CD4-positive, alpha-beta memory T cell (primary cell): ENCODE measurements at regions of chr1 and their contacts with region 1.

Region 1: DNA sequence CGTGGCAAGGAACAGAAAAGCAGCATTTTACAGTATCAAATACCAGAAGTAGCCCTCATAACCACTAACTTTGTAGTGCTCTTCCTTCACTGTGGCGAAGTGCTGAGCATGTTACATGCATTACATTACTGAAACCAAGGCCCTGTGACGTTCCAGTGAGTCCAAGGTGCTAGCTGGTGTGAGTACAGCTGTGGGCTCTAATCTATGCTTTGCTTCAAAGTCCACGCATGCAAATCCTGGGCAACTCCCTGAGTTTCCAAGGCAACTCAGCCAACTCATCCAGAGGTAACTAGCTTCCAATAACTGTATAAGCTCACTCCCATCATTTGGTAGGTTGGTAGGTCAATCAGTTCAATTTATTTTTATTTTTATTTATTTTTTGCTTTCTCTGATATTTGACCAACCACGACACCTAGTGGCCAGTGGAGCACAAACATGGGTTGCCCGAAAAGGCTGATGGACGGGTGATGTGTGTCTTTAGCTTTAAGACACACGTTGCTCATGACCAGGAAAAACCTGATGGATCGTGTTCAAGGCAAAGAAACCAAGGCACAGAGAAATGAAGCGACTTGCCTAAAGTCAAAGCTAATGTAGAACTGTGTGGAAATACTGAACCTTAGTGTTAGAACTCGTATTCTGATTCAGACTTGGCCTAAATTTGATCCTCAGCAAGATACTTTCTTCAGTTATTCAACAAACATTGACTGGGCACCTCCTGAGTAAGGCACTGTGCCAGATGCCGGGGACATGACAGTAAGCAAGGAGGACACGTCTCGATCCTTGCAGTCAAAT is 73.0 kb downstream of the GNG12 start:
- DNase-seq: peak in 4 of 5 donors; percentile 33 to 58 (median 48)
- H3K4me3 ChIP-seq: no peak overlapping the region
- H3K4me3 Mint-ChIP-seq: no peak overlapping the region
- H3K27ac ChIP-seq: no peak overlapping the region
- H3K27ac Mint-ChIP-seq: no peak overlapping the region
- H3K4me1 ChIP-seq: no peaks in the 10 kb centered on the region
- H3K4me1 Mint-ChIP-seq: no peaks in the 10 kb centered on the region
- H3K27me3 ChIP-seq: no peaks in the 10 kb centered on the region
- H3K27me3 Mint-ChIP-seq: peaks cover 17 to 20% of the 10 kb centered on the region in 2 donors

Region 2: DNA sequence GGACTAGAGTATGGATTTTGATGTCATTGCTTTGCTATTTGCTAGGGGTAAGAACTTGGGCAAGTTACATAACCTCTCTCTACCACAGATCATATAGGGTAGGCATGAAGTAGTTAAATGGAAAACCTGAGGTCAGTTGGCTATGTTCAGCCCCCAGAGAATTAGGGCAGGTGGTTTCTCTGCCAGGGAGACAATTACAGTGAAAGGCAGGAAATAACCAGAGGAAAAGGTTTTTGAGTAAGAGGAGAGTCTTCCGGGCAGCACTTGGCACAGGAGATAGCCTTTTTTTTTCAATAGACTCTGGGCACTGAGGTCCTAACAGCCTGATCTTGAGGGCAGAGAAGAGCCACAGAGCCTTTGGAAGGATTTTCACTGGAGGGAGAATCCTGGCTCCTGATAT is 313.3 kb before region 1 on chr1:
- CTCF ChIA-PET with region 1: no interaction called
- POLR2A ChIA-PET with region 1: no interaction called
- intact Hi-C with region 1: no loop called
- DNase-seq: no peak
- H3K4me3 ChIP-seq: no peak overlapping the region
- H3K4me3 Mint-ChIP-seq: no peak overlapping the region
- H3K27ac ChIP-seq: no peak overlapping the region
- H3K27ac Mint-ChIP-seq: no peak overlapping the region
- H3K4me1 ChIP-seq: no peaks in the 10 kb centered on the region
- H3K4me1 Mint-ChIP-seq: peaks cover 0 to 7% (median 5%) of the 10 kb centered on the region in 4 donors
- H3K27me3 ChIP-seq: no peaks in the 10 kb centered on the region
- H3K27me3 Mint-ChIP-seq: peaks cover 3% of the 10 kb centered on the region in 2 donors

Region 3: DNA sequence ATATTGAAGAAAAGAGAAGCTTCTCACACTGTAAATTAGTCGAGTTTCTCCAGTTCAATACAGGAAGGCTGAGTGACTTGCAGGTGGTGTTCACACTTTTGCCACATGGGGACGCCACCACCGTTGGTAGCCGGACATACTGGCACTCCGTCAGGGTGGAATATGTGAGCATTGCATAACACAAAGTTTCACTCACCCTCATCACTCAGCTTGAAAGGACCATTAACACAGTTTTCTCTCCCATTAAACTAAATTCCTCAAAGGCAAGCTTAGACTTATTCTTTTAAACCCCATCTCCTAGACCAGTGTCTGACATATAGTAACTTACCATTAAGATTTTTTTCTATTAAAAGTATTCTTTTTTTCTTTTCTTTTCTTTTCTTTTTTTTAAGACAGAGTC is 224.8 kb before region 1 on chr1:
- CTCF ChIA-PET with region 1: interaction called, 84 read pairs
- POLR2A ChIA-PET with region 1: no interaction called
- intact Hi-C with region 1: loop called (anchors 1 kb)
- DNase-seq: peak in 1 of 5 donors; percentile 6
- H3K4me3 ChIP-seq: no peak overlapping the region
- H3K4me3 Mint-ChIP-seq: no peak overlapping the region
- H3K27ac ChIP-seq: no peak overlapping the region
- H3K27ac Mint-ChIP-seq: no peak overlapping the region
- H3K4me1 ChIP-seq: no peaks in the 10 kb centered on the region
- H3K4me1 Mint-ChIP-seq: peaks cover 0 to 2% (median under 1%) of the 10 kb centered on the region in 4 donors
- H3K27me3 ChIP-seq: no peaks in the 10 kb centered on the region
- H3K27me3 Mint-ChIP-seq: peaks cover 0 to 5% of the 10 kb centered on the region in 2 donors

Region 4: GRCh38 chr1:67552336-67552759 is 207.9 kb before region 1 on chr1:
- CTCF ChIA-PET with region 1: interaction called, 320 read pairs
- POLR2A ChIA-PET with region 1: no interaction called
- intact Hi-C with region 1: no loop called
- DNase-seq: no peak
- H3K4me3 ChIP-seq: no peak overlapping the region
- H3K4me3 Mint-ChIP-seq: no peak overlapping the region
- H3K27ac ChIP-seq: no peak overlapping the region
- H3K27ac Mint-ChIP-seq: no peak overlapping the region
- H3K4me1 ChIP-seq: no peaks in the 10 kb centered on the region
- H3K4me1 Mint-ChIP-seq: no peaks in the 10 kb centered on the region
- H3K27me3 ChIP-seq: no peaks in the 10 kb centered on the region
- H3K27me3 Mint-ChIP-seq: peaks cover 13 to 15% of the 10 kb centered on the region in 2 donors

Region 5: GRCh38 chr1:67570473-67571143 is 189.6 kb before region 1 on chr1:
- CTCF ChIA-PET with region 1: interaction called, 80 read pairs
- POLR2A ChIA-PET with region 1: no interaction called
- intact Hi-C with region 1: no loop called
- DNase-seq: no peak
- H3K4me3 ChIP-seq: no peak overlapping the region
- H3K4me3 Mint-ChIP-seq: no peak overlapping the region
- H3K27ac ChIP-seq: no peak overlapping the region
- H3K27ac Mint-ChIP-seq: no peak overlapping the region
- H3K4me1 ChIP-seq: no peaks in the 10 kb centered on the region
- H3K4me1 Mint-ChIP-seq: no peaks in the 10 kb centered on the region
- H3K27me3 ChIP-seq: no peaks in the 10 kb centered on the region
- H3K27me3 Mint-ChIP-seq: peaks cover 2 to 3% of the 10 kb centered on the region in 2 donors

Region 6: GRCh38 chr1:67685067-67685557 is 75.1 kb before region 1 on chr1 and contains the start of gene GADD45A:
- CTCF ChIA-PET with region 1: interaction called, 46 read pairs
- POLR2A ChIA-PET with region 1: interaction called, 21 read pairs
- intact Hi-C with region 1: loop called (anchors 2 kb)
- DNase-seq: peak; percentile 93 to 98 (median 95)
- H3K4me3 ChIP-seq: peak within 1 kb of the TSS; percentile 69 to 81
- H3K4me3 Mint-ChIP-seq: peak within 1 kb of the TSS; percentile 96 to 99 (median 98)
- H3K27ac ChIP-seq: peak within 1 kb of the TSS; percentile 60
- H3K27ac Mint-ChIP-seq: peak within 1 kb of the TSS; percentile 88 to 97 (median 96)
- H3K4me1 ChIP-seq: peaks cover 19% of the 10 kb centered on the region
- H3K4me1 Mint-ChIP-seq: peaks cover 11 to 24% (median 18%) of the 10 kb centered on the region in 4 donors
- H3K27me3 ChIP-seq: no peaks in the 10 kb centered on the region
- H3K27me3 Mint-ChIP-seq: no peaks in the 10 kb centered on the region
- total RNA-seq, gene GADD45A: 25.3 to 26.8 TPM